Posterior cingulate gyrus (tissue), 11 donors: ENCODE measurements at regions of chr17 and their contacts with region 1.

Region 1: DNA sequence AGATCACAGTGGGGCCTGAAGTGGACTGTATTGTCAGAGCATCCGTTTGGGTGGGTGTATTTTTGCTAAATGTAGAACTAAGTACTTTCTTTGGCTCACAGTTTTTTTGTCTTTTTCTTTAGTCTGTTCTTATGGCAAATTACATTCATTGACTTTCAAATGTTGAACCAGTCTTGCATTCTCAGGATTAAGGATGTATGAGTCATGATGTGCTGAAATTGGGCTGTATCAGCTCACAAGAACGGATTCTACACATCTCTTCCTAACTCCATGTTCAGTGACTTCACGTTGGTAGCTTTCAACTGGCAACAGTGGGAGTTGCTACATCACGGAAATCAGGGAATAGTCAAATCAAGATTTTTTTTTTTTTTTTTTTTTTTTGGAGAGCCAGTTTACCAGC is 66.4 kb downstream of the TEX2 start:
- DNase-seq: no peak

Region 2: DNA sequence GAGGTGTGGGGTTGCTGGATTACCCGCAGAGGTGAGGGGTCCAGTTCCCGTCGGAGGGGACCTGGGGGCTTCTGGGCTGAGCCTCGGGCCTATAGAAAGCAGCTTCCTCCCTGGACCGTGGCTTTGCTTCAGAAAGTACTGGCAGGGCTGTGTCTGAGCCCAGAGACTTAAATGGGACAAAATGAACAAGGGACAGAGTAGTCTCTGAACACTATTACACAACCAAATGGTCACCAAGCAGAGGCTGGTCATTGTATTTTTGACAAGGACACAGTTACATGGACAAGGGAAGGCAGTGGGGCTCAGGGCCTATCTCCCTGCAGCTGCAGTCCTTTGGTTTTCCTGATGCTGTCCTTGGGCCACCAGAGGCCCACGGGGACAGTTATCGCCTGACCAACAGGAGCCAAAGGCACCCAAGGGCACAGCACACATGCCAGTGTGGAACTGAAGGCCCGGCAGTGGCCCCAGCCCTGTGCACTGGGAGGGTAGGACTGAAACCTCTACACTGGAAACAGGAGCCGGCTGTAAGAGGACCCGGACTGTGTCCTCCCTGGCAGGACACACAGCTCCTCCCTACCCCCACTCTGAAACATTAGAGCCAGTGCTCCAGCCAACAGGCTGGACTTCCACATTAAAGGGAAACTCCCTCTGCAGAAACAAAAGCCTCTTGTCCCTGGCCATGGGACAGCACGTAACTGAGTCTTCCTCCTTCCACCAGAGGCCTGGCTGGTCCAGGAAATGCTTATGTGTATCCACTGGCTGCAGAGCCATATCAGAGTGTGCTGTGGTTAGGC is 40.7 kb before region 1 on chr17:
- intact Hi-C with region 1: loop called (anchors 5 kb)
- DNase-seq: peak in 9 of 10 donors; percentile 50 to 96 (median 75)

Region 3: GRCh38 chr17:64275016-64275415 is 78.4 kb after region 1 on chr17:
- intact Hi-C with region 1: no loop called
- DNase-seq: peak in 2 of 10 donors; percentile 2 to 4